Activated naive CD4-positive, alpha-beta T cell treated with anti-CD3 and anti-CD28 coated beads for 36 hours (primary cell): ENCODE measurements at regions of chr5 and their contacts with region 1.

Region 1: DNA sequence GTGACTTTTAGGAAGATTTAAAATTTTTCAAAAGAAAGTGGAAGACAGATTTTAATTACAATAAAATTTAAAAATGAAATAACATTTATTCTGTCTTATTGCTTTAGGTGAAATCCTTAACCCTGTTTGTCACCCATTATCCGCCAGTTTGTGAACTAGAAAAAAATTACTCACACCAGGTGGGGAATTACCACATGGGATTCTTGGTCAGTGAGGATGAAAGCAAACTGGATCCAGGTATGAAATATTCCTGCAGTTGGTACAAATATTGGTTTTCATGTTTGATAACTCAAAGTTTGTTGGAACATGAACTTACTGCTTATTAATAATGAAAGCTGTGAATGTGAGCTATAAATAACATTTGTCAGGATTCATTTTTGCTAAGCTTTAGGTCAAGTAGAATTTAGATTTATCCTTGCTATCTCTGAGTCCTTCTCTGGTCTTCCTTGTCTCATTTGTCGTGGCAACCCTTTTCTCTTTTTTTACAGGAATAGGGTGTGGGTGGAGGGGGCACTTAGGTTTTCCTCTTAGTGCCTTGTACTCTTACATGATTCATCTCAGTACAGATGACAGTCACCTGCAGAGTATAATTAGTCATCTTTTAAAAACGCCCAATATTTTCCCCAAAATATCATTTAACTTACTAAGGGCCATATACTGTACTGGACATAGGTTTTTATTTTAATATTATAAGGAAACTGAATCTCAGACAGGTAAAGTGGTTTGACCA is 95.3 kb upstream of the RASGRF2 start:
- DNase-seq: peak; percentile 30
- H3K4me3 Mint-ChIP-seq: no peak overlapping the region
- H3K27ac Mint-ChIP-seq: peak overlapping the region; percentile 21
- H3K4me1 Mint-ChIP-seq: peaks cover 47% of the 10 kb centered on the region
- H3K27me3 Mint-ChIP-seq: no peaks in the 10 kb centered on the region

Region 2: GRCh38 chr5:80781356-80781755 is 83.5 kb before region 1 on chr5:
- CTCF ChIA-PET with region 1: no interaction called
- intact Hi-C with region 1: loop called (anchors 5 kb)
- DNase-seq: no peak
- H3K4me3 Mint-ChIP-seq: no peak overlapping the region
- H3K27ac Mint-ChIP-seq: no peak overlapping the region
- H3K4me1 Mint-ChIP-seq: peaks cover 15% of the 10 kb centered on the region
- H3K27me3 Mint-ChIP-seq: no peaks in the 10 kb centered on the region

Region 3: DNA sequence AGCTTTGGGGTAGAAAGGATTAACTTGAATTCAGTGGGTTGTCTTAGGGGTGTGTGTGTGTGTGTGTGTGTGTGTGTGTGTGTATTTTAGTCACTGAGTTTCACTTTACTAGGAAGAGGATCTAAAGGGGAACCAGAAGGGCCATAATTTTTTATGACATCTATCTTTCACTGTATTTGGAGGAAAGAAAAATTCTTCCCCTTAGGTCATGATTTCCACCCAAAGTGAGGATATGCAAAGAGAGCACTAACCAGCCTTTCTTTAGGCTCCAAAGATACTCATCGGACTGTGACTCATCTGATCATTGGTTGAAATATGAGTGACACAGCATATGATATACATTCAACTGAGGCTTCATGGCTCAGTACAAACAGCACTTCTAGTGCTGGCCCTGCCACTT is 20.1 kb after region 1 on chr5:
- CTCF ChIA-PET with region 1: interaction called, 4 read pairs
- intact Hi-C with region 1: loop called (anchors 1 kb)
- DNase-seq: peak; percentile 9
- H3K4me3 Mint-ChIP-seq: no peak overlapping the region
- H3K27ac Mint-ChIP-seq: peak overlapping the region; percentile 34
- H3K4me1 Mint-ChIP-seq: peaks cover 23% of the 10 kb centered on the region
- H3K27me3 Mint-ChIP-seq: no peaks in the 10 kb centered on the region

Region 4: DNA sequence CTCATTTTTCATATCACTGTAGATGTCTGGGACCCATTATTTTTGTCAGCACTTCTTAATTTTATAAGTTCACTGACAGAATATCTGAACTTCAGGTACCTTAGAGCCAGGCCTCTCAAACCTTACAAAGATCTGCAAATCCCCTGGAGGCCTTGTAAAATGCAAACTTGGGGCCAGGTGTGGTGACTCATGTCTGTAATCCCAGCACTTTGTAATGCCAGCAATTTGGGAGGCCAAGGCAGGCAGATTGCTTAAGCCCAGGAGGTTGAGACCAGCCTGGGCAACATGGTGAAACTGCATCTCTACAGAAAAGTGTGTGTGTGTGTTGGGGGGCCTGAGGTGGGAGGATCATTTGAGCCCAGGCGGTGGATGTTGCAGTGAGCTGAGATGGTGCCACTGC is 126.1 kb after region 1 on chr5:
- CTCF ChIA-PET with region 1: no interaction called
- intact Hi-C with region 1: no loop called
- DNase-seq: peak; percentile 26
- H3K4me3 Mint-ChIP-seq: no peak overlapping the region
- H3K27ac Mint-ChIP-seq: no peak overlapping the region
- H3K4me1 Mint-ChIP-seq: peaks cover 85% of the 10 kb centered on the region
- H3K27me3 Mint-ChIP-seq: no peaks in the 10 kb centered on the region